ENCODE measurements at regions of chr4 and their contacts with region 1.

Region 1: GRCh38 chr4:87375719-87376291 is 15.2 kb downstream of the HSD17B11 start:
- DNase-seq: peak; percentile 62
- ATAC-seq: peak; percentile 48
- H3K4me3 ChIP-seq: no peak overlapping the region
- H3K27ac ChIP-seq: no peak overlapping the region
- H3K4me1 ChIP-seq: no peaks in the 10 kb centered on the region
- H3K27me3 ChIP-seq: no peaks in the 10 kb centered on the region
- CTCF ChIP-seq: peak; percentile 70

Region 2: GRCh38 chr4:87209696-87210095 is 166.1 kb before region 1 on chr4:
- CTCF ChIA-PET with region 1: no interaction called
- POLR2A ChIA-PET with region 1: no interaction called
- intact Hi-C with region 1: no loop called
- DNase-seq: no peak
- ATAC-seq: no peak
- H3K4me3 ChIP-seq: no peak overlapping the region
- H3K27ac ChIP-seq: no peak overlapping the region
- H3K4me1 ChIP-seq: no peaks in the 10 kb centered on the region
- H3K27me3 ChIP-seq: no peaks in the 10 kb centered on the region
- CTCF ChIP-seq: no peak

Region 3: DNA sequence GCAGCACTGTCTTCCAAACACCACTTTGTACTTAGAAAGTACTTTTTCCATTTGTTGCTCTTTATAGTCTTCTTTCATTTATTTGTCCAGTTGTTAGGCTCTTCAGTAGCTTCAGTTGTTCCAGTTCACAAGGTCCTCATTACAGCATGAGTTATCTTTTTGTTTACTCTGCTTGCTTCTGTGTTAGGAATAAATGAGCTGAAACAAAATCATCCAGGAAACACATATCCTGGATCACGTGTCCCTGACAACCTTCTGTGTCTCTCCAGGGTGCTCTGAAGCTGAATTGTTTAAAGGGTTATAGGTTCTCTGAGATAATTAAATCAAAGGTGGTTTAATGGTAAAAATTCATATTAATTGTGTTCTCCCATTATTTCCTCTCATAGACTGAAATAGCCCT is 135.5 kb before region 1 on chr4:
- CTCF ChIA-PET with region 1: no interaction called
- POLR2A ChIA-PET with region 1: no interaction called
- intact Hi-C with region 1: no loop called
- DNase-seq: peak; percentile 36
- ATAC-seq: peak; percentile 59
- H3K4me3 ChIP-seq: peak overlapping the region; percentile 38; the same call in 1 of the 2 replicates
- H3K27ac ChIP-seq: peak overlapping the region; percentile 63
- H3K4me1 ChIP-seq: peaks cover 30% of the 10 kb centered on the region
- H3K27me3 ChIP-seq: no peaks in the 10 kb centered on the region
- CTCF ChIP-seq: no peak

Region 4: GRCh38 chr4:88204882-88205281 is 829.1 kb after region 1 on chr4:
- CTCF ChIA-PET with region 1: no interaction called
- POLR2A ChIA-PET with region 1: interaction called, 10 read pairs
- intact Hi-C with region 1: no loop called
- DNase-seq: peak; percentile 7
- ATAC-seq: no peak
- H3K4me3 ChIP-seq: no peak overlapping the region
- H3K27ac ChIP-seq: no peak overlapping the region
- H3K4me1 ChIP-seq: peaks cover 4% of the 10 kb centered on the region; the same call in 1 of the 2 replicates
- H3K27me3 ChIP-seq: no peaks in the 10 kb centered on the region
- CTCF ChIP-seq: no peak